CD8-positive, alpha-beta T cell (primary cell): ENCODE measurements at regions of chr5 and their contacts with region 1.

Region 1: DNA sequence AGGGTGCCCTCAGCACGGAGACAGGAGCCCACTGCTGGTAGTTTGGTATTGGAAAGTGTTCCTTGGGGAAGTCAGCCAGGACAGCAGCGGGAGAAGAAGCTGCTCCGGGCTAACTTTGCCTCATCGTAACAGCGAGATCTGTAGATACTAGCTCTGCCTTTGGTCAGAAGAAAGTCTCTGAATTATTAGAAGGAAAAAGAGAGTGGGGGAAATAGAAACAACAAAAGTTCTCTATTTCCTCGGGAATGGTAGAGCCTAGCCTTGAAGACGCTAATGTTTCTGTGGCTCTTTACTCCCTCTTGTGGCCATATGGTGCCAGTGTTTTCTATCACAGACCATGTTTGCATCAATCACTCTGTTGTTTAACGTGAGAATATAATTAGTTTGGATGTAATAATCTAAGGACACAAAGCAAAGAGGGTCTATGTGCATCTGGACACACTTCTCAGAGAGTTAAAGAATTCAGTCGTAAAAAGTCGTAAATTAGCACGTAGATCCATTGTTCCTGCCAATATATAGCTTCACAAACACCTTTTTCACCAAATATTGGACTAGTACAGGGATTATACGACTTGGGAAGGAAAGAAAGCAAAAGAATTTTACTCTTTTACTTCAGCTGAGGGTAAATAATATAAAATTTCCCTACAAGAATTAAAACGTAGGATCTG is 40.2 kb upstream of the HSD17B4 start:
- DNase-seq: peak in 8 of 9 experiments; percentile 27 to 85 (median 57)
- ATAC-seq: peak; percentile 88
- H3K4me3 ChIP-seq: peak overlapping the region; percentile 43 to 49
- H3K4me3 Mint-ChIP-seq: peak overlapping the region; percentile 86
- H3K27ac ChIP-seq: no peak overlapping the region
- H3K27ac Mint-ChIP-seq: peak overlapping the region; percentile 74
- H3K4me1 ChIP-seq: peaks cover 5% of the 10 kb centered on the region
- H3K4me1 Mint-ChIP-seq: peaks cover 16% of the 10 kb centered on the region
- H3K27me3 ChIP-seq: no peaks in the 10 kb centered on the region
- H3K27me3 Mint-ChIP-seq: no peaks in the 10 kb centered on the region
- CTCF ChIP-seq: peak; percentile 89

Region 2: GRCh38 chr5:119022017-119022745 is 389.9 kb before region 1 on chr5:
- CTCF ChIA-PET with region 1: interaction called, 68 read pairs
- POLR2A ChIA-PET with region 1: no interaction called
- intact Hi-C with region 1: loop called (anchors 1 kb)
- DNase-seq: peak in 2 of 9 experiments; percentile 48 to 56
- ATAC-seq: peak; percentile 42
- H3K4me3 ChIP-seq: no peak overlapping the region
- H3K4me3 Mint-ChIP-seq: no peak overlapping the region
- H3K27ac ChIP-seq: no peak overlapping the region
- H3K27ac Mint-ChIP-seq: no peak overlapping the region
- H3K4me1 ChIP-seq: no peaks in the 10 kb centered on the region
- H3K4me1 Mint-ChIP-seq: no peaks in the 10 kb centered on the region
- H3K27me3 ChIP-seq: no peaks in the 10 kb centered on the region
- H3K27me3 Mint-ChIP-seq: no peaks in the 10 kb centered on the region
- CTCF ChIP-seq: peak; percentile 50

Region 3: GRCh38 chr5:119238265-119239118 is 173.6 kb before region 1 on chr5:
- CTCF ChIA-PET with region 1: interaction called, 13 read pairs
- POLR2A ChIA-PET with region 1: no interaction called
- intact Hi-C with region 1: loop called in 1 of 2 experiments (anchors 5 kb)
- DNase-seq: peak in 2 of 9 experiments; percentile 26 to 52
- ATAC-seq: peak; percentile 91
- H3K4me3 ChIP-seq: peak overlapping the region in 1 of 2 experiments; percentile 24
- H3K4me3 Mint-ChIP-seq: peak overlapping the region; percentile 52
- H3K27ac ChIP-seq: peak overlapping the region; percentile 4 to 48
- H3K27ac Mint-ChIP-seq: peak overlapping the region; percentile 88
- H3K4me1 ChIP-seq: peaks cover 14% of the 10 kb centered on the region
- H3K4me1 Mint-ChIP-seq: peaks cover 30% of the 10 kb centered on the region
- H3K27me3 ChIP-seq: no peaks in the 10 kb centered on the region
- H3K27me3 Mint-ChIP-seq: no peaks in the 10 kb centered on the region
- CTCF ChIP-seq: no peak

Region 4: DNA sequence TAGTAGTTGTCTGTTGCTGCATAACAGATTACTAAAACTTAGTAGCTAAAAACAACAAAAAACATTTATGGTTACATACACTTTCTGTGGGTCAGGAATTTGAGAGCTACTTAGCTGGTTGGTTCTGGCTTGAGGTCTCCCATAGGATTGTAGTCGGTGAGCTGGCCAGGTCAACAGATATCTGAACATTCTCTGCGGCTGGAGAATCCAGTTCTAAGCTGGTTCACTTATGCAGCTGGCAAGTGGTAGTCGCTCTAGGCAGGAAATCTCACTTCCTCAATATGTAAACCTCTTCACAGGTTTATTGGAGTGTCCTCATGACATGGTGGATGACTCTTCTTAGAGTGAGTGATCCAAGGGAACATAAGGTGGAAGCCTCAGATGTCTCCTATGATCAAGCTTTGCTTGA is 121.9 kb before region 1 on chr5:
- CTCF ChIA-PET with region 1: interaction called, 11 read pairs
- POLR2A ChIA-PET with region 1: interaction called, 4 read pairs
- intact Hi-C with region 1: no loop called
- DNase-seq: peak in 2 of 9 experiments; percentile 41 to 68
- ATAC-seq: peak; percentile 27
- H3K4me3 ChIP-seq: peak overlapping the region; percentile 9 to 10
- H3K4me3 Mint-ChIP-seq: peak overlapping the region; percentile 69
- H3K27ac ChIP-seq: peak overlapping the region; percentile 9 to 83
- H3K27ac Mint-ChIP-seq: peak overlapping the region; percentile 97
- H3K4me1 ChIP-seq: peaks cover 75% of the 10 kb centered on the region
- H3K4me1 Mint-ChIP-seq: peaks cover 86% of the 10 kb centered on the region
- H3K27me3 ChIP-seq: no peaks in the 10 kb centered on the region
- H3K27me3 Mint-ChIP-seq: no peaks in the 10 kb centered on the region
- CTCF ChIP-seq: no peak

Region 5: GRCh38 chr5:119340597-119341218 is 71.4 kb before region 1 on chr5:
- CTCF ChIA-PET with region 1: interaction called, 24 read pairs
- POLR2A ChIA-PET with region 1: interaction called, 4 read pairs
- intact Hi-C with region 1: no loop called
- DNase-seq: peak in 8 of 9 experiments; percentile 34 to 80 (median 65)
- ATAC-seq: peak; percentile 51
- H3K4me3 ChIP-seq: peak overlapping the region; percentile 18 to 41
- H3K4me3 Mint-ChIP-seq: peak overlapping the region; percentile 75
- H3K27ac ChIP-seq: peak overlapping the region; percentile 8 to 62
- H3K27ac Mint-ChIP-seq: peak overlapping the region; percentile 94
- H3K4me1 ChIP-seq: peaks cover 96% of the 10 kb centered on the region
- H3K4me1 Mint-ChIP-seq: peaks cover 94% of the 10 kb centered on the region
- H3K27me3 ChIP-seq: no peaks in the 10 kb centered on the region
- H3K27me3 Mint-ChIP-seq: no peaks in the 10 kb centered on the region
- CTCF ChIP-seq: no peak

Region 6: DNA sequence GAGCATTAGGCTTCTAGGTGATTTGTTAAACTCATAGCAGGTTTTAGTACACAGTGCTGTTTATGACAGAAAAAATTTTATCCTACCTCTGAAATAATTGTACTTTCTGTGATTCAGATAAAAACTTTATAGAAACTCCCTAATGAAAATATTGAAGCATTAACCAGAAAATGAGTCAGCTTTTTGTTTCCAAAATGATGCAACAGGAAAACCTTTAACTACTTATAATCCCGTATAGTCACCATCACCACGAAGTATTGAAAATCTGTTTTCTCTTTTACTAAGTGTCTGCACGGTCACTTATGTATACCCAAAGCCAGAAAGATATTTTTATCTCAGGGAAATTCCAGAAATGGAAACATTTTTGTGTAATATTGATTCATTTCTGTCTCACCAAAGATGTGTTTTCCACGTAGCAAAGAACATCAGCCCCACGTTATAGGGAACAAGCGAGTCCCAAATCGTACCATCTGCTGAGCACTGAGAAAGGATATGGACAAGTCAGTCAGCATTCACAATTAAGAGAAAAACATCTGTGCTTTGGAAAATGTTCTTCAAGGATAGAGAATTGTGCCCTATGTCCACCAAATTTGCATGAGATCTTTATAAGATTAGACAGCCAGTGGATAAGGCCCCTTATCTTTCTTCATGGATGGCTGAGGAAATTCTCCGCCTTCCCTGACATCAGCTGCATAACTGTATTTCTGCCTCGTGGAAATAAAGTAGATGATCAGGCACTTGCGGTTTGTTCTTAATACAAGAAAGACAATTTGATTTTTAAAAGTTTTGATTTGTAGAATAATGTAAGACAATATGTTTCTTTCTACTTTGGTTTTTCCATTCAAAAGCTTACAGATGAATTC is 14.3 kb before region 1 on chr5:
- CTCF ChIA-PET with region 1: interaction called, 16 read pairs
- POLR2A ChIA-PET with region 1: interaction called, 3 read pairs
- intact Hi-C with region 1: no loop called
- DNase-seq: peak in 1 of 9 experiments; percentile 35
- ATAC-seq: peak; percentile 20
- H3K4me3 ChIP-seq: no peak overlapping the region
- H3K4me3 Mint-ChIP-seq: no peak overlapping the region
- H3K27ac ChIP-seq: no peak overlapping the region
- H3K27ac Mint-ChIP-seq: peak overlapping the region; percentile 83
- H3K4me1 ChIP-seq: peaks cover 5% of the 10 kb centered on the region
- H3K4me1 Mint-ChIP-seq: peaks cover 56% of the 10 kb centered on the region
- H3K27me3 ChIP-seq: no peaks in the 10 kb centered on the region
- H3K27me3 Mint-ChIP-seq: no peaks in the 10 kb centered on the region
- CTCF ChIP-seq: no peak